ENCODE measurements at regions of chr11 and their contacts with region 1.

Region 1: GRCh38 chr11:1572197-1573076 is at the start of gene DUSP8:
- DNase-seq: peak; percentile 86 to 89
- ATAC-seq: peak; percentile 76 to 81
- H3K4me3 ChIP-seq: peak within 1 kb of the TSS; percentile 59 to 83 (median 68)
- H3K27ac ChIP-seq: peak within 1 kb of the TSS; percentile 85 to 91 (median 88)
- H3K4me1 ChIP-seq: peaks cover 5 to 54% of the 10 kb centered on the region in 2 donors
- H3K27me3 ChIP-seq: no peaks in the 10 kb centered on the region
- CTCF ChIP-seq: no peak
- POLR2A ChIP-seq: peak; percentile 78 to 86
- total RNA-seq, gene DUSP8: 2.6 to 25.9 (median 6.3) TPM

Region 2: DNA sequence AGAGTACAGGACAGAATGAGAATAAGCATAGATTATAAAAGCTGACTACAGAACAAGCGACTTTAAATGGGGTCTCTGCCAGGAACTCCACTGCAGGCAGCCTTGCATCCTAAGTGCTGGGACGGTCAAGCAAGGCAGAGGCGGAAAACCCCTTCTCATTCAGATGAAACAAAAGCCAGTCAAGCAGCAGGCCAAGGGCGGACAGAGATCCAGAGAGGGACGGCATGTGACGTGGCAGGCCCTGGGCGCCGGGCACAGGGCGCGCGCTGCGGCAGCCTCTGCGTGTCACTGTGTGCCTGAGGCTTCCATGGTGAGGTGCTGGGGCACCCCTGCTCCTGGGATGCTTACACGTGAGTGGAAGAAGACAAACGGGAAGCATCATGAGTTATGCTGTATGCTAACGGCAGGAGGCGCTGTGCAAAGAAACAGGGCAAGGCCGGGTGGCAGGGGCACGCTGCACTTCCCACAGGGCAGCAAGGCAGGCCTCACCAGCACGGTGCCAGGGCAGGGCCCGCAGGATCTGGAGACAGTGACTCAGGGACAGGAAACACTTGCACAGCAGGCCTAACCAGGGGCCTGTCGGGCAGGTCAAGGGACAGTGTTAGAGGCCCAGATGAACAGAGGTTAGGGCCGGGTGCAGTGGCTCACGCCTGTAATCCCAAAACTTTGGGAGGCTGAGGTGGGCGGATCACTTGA is 269.2 kb before region 1 on chr11:
- in situ Hi-C with region 1: no loop called
- intact Hi-C with region 1: no loop called
- DNase-seq: no peak
- ATAC-seq: no peak
- H3K4me3 ChIP-seq: no peak overlapping the region
- H3K27ac ChIP-seq: peak overlapping the region; percentile 10 to 61 (median 43)
- H3K4me1 ChIP-seq: peaks cover 43 to 57% of the 10 kb centered on the region in 2 donors
- H3K27me3 ChIP-seq: no peaks in the 10 kb centered on the region
- CTCF ChIP-seq: peak in 1 of 5 experiments; percentile 14
- POLR2A ChIP-seq: no peak

Region 3: GRCh38 chr11:1422481-1422880 is 150.0 kb before region 1 on chr11:
- in situ Hi-C with region 1: no loop called
- intact Hi-C with region 1: no loop called
- DNase-seq: no peak
- ATAC-seq: no peak
- H3K4me3 ChIP-seq: no peak overlapping the region
- H3K27ac ChIP-seq: no peak overlapping the region
- H3K4me1 ChIP-seq: no peaks in the 10 kb centered on the region
- H3K27me3 ChIP-seq: no peaks in the 10 kb centered on the region
- CTCF ChIP-seq: no peak
- POLR2A ChIP-seq: no peak

Region 4: DNA sequence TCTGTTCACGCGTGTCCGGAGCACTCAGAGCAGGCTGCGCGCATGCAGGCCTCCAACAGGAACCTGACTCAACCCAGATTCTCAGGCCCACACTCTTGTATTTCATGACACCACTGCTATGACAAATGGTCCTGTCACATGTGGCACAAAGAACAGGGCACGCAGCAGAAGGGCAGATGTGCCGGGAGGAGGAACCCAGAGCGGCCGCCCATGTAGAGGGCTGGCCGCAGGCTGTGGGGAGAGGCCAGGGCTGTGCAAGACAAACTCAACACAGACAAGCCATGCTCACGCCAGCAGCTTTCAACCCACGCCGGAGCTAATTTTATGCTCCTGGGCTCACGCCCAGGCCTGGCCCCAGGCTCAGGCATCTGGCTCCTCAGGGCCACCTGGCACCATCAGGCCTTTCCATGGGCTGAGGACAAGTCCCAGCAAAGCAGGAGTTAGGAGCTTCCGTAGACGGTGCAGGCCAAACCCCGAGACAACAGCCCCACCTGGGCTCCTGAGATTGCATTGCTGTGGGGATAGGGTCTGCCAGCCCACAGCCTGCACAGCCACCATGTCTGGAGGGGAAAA is 40.3 kb before region 1 on chr11:
- in situ Hi-C with region 1: loop called in 1 of 4 experiments (anchors 5 kb)
- intact Hi-C with region 1: no loop called
- DNase-seq: peak; percentile 74 to 93
- ATAC-seq: peak; percentile 90
- H3K4me3 ChIP-seq: peak overlapping the region in 2 of 4 donors; percentile 18 to 35
- H3K27ac ChIP-seq: peak overlapping the region; percentile 84 to 96 (median 90)
- H3K4me1 ChIP-seq: peaks cover 82 to 99% of the 10 kb centered on the region in 2 donors
- H3K27me3 ChIP-seq: no peaks in the 10 kb centered on the region
- CTCF ChIP-seq: no peak
- POLR2A ChIP-seq: peak; percentile 76 to 86

Region 5: DNA sequence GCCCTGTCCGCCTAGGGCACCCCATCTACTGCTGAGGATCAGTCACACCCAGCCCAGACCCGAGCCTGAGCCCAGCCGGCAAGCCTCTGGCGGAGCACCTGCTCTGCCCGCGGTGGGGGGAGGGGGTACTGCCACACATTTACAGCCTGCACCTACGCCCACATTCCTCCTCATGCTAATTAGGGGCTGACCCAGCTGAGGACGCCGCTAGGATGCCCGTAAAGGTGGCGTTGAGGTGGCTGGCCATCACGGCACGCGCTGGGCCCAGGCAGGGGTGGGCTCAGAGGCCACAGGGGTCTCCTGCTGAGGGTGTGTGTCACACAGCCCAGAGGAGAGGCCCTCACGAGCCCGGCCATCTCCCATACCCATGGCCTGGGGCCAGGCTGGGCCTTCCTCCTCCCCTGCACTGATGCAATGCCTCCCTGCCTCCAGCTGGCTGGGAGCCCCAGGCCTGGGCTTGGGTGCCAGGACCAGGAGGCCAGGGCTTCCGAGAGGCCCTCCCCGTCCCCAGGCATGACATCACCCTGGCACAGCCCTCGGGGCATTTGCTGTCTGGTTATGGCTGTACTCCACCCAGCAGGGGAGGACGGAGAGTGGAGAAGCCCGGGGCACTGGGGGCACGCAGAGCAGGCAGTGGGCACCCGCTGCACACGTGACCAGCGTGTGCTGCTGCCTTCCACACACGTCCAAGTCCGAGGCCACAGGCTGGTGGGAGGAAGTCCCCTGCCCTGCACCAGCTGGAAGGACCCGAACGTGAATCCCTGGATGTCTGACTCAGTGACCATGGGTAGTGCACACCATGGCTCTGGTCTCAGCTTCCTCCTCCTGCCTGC is 13.1 kb before region 1 on chr11:
- in situ Hi-C with region 1: no loop called
- intact Hi-C with region 1: loop called (anchors 1 kb)
- DNase-seq: peak; percentile 79 to 96
- ATAC-seq: peak; percentile 82 to 85
- H3K4me3 ChIP-seq: peak overlapping the region in 3 of 4 donors; percentile 17 to 27 (median 22)
- H3K27ac ChIP-seq: peak overlapping the region; percentile 87 to 95 (median 92)
- H3K4me1 ChIP-seq: peaks cover 21 to 41% of the 10 kb centered on the region in 2 donors
- H3K27me3 ChIP-seq: no peaks in the 10 kb centered on the region
- CTCF ChIP-seq: peak in 2 of 5 experiments; percentile 26 to 27
- POLR2A ChIP-seq: peak in 1 of 2 donors; percentile 43

Region 6: GRCh38 chr11:1628506-1629325 is 56.3 kb after region 1 on chr11:
- in situ Hi-C with region 1: no loop called
- intact Hi-C with region 1: loop called (anchors 2 kb)
- DNase-seq: peak in 1 of 2 donors; percentile 21
- ATAC-seq: peak; percentile 81 to 91
- H3K4me3 ChIP-seq: no peak overlapping the region
- H3K27ac ChIP-seq: no peak overlapping the region
- H3K4me1 ChIP-seq: no peaks in the 10 kb centered on the region
- H3K27me3 ChIP-seq: peaks cover 0 to 11% (median 4%) of the 10 kb centered on the region in 3 donors
- CTCF ChIP-seq: peak; percentile 58 to 92 (median 79)
- POLR2A ChIP-seq: no peak

Region 7: GRCh38 chr11:1825039-1825740 is 252.8 kb after region 1 on chr11:
- in situ Hi-C with region 1: no loop called
- intact Hi-C with region 1: no loop called
- DNase-seq: no peak
- ATAC-seq: no peak
- H3K4me3 ChIP-seq: no peak overlapping the region
- H3K27ac ChIP-seq: no peak overlapping the region
- H3K4me1 ChIP-seq: no peaks in the 10 kb centered on the region
- H3K27me3 ChIP-seq: no peaks in the 10 kb centered on the region
- CTCF ChIP-seq: peak in 1 of 5 experiments; percentile 14
- POLR2A ChIP-seq: no peak

Measured in gastrocnemius medialis (tissue), 4 donors.